Common myeloid progenitor, CD34-positive (primary cell): ENCODE measurements at regions of chr4 and their contacts with region 1.

Region 1: GRCh38 chr4:102441978-102442911 is 58.9 kb upstream of the NFKB1 start:
- DNase-seq: no peak
- H3K4me3 ChIP-seq: no peak overlapping the region
- H3K27ac ChIP-seq: no peak overlapping the region
- H3K4me1 ChIP-seq: peaks cover 0 to 12% (median 7%) of the 10 kb centered on the region in 4 experiments
- H3K27me3 ChIP-seq: no peaks in the 10 kb centered on the region

Region 2: DNA sequence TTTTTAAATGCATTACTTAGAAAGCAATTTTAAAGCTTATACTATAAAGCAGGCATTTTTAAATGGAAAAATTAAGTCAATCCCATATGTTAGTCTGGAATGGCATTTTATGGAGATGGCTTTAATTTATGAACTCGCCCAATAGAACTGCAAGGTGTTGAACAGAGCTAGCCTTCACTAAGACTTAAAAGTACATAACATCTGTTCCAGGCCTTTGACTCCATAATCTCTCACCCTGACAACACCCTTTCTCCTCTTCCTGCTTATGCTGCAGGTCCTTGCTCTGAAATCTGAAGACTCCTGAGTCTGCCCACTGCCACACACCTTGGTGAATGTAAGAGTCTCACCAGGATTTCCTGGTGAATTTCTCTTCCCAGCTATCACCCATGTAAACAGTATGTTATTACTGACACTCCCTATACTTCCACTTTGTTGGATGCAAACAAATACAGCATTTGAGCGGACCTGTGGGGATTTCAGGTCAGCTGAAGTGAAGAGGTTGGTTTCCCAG is 79.3 kb before region 1 on chr4:
- CTCF ChIA-PET with region 1: no interaction called
- POLR2A ChIA-PET with region 1: no interaction called
- DNase-seq: no peak
- H3K4me3 ChIP-seq: no peak overlapping the region
- H3K27ac ChIP-seq: no peak overlapping the region
- H3K4me1 ChIP-seq: no peaks in the 10 kb centered on the region
- H3K27me3 ChIP-seq: no peaks in the 10 kb centered on the region

Region 3: DNA sequence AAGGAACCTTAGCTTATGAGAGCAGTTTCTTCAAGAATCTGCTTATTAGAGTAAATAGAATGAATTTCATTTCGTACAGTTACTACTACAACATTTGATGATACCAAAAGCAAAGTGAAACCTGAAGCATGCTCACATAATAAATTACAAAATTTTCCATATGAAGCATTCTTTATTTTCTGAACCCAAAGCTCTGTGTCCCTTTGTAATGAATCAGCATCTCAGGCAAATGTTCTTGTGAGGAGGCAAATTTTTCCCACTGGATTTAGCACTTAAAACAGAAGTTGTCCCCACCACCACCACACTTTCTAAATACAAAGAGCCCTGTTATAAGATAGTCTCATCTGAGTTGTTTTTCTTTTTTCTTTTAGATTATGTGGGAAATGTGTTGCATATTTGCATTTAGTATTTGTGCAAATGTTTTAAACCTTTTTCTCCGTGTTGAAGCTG is 11.8 kb before region 1 on chr4:
- CTCF ChIA-PET with region 1: interaction called, 12 read pairs
- POLR2A ChIA-PET with region 1: no interaction called
- DNase-seq: peak in 1 of 3 donors; percentile 31
- H3K4me3 ChIP-seq: peak overlapping the region in 6 of 7 experiments; percentile 72 to 95 (median 82)
- H3K27ac ChIP-seq: peak overlapping the region; percentile 59 to 81
- H3K4me1 ChIP-seq: peaks cover 0 to 6% (median 4%) of the 10 kb centered on the region in 4 experiments
- H3K27me3 ChIP-seq: no peaks in the 10 kb centered on the region